ENCODE measurements at regions of chr2 and their contacts with region 1.

Region 1: DNA sequence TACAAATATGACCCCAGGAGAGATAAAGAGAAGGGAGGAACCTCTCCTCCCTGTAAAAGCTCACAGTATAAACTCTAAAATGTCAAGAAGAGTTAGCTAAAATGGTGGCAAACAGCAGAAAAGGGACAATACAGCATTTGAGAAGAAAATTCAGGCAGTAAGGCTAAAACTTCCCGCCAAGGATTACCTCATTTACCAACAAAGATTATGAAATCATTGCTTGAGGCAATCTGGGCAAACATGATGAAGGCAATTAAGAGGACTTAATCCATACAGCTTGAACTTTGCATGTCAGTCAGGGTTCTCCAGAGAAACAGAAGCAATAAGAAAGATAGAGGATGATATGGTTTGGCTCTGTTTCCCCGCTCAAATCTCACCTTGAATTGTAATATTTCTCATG is 81.4 kb downstream of the CMPK2 start:
- DNase-seq: no peak
- H3K4me3 ChIP-seq: no peak overlapping the region
- H3K27ac ChIP-seq: no peak overlapping the region
- H3K4me1 ChIP-seq: no peaks in the 10 kb centered on the region
- H3K27me3 ChIP-seq: no peaks in the 10 kb centered on the region
- CTCF ChIP-seq: no peak
- POLR2A ChIP-seq: no peak

Region 2: GRCh38 chr2:5969303-5969702 is 815.0 kb before region 1 on chr2:
- intact Hi-C with region 1: loop called (anchors 5 kb)
- DNase-seq: no peak
- H3K4me3 ChIP-seq: no peak overlapping the region
- H3K27ac ChIP-seq: no peak overlapping the region
- H3K4me1 ChIP-seq: no peaks in the 10 kb centered on the region
- H3K27me3 ChIP-seq: no peaks in the 10 kb centered on the region
- CTCF ChIP-seq: no peak
- POLR2A ChIP-seq: no peak

Region 3: DNA sequence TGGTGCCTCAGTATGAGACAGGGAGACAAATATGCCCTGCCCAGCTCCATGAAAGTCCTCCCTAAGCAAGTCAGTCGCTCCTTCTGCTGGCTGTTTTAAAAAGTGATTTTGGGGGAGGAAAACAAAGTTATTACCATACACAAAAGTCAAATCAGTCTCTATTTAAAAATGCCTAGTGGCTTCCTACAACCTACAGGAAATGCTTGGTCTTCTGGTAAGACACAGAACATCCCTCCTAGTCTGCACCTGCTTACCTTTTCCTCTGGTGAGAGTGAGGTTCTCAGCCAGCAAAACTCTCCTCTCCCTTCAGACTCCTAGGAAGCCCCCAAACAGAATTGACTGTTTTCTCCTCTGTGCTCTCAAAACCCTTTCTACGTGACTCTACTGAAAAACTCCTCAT is 67.9 kb after region 1 on chr2:
- intact Hi-C with region 1: loop called (anchors 2 kb)
- DNase-seq: no peak
- H3K4me3 ChIP-seq: no peak overlapping the region
- H3K27ac ChIP-seq: no peak overlapping the region
- H3K4me1 ChIP-seq: no peaks in the 10 kb centered on the region
- H3K27me3 ChIP-seq: no peaks in the 10 kb centered on the region
- CTCF ChIP-seq: no peak
- POLR2A ChIP-seq: no peak

Region 4: DNA sequence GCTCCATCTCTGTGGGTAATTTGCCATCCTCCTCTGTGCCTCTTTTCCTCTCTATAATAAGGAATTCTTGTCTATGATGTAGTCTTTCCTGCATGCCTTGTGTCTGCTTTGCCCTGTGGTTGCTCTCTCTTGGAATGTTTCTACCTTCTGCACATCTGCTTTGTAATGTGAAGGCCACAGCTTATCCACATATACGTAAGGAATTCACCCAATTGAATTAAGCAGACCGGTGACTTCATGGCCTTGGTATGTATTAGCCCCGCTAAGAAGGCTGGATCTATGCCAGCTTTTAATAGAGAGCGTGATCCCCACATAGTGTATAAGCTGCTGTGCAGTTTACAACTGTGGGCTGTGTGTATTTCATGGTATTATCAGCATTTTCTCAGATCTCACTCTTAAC is 407.6 kb after region 1 on chr2:
- intact Hi-C with region 1: no loop called
- DNase-seq: no peak
- H3K4me3 ChIP-seq: no peak overlapping the region
- H3K27ac ChIP-seq: no peak overlapping the region
- H3K4me1 ChIP-seq: no peaks in the 10 kb centered on the region
- H3K27me3 ChIP-seq: no peaks in the 10 kb centered on the region
- CTCF ChIP-seq: no peak
- POLR2A ChIP-seq: no peak